ENCODE measurements at regions of chr3 and their contacts with region 1.

Region 1: GRCh38 chr3:3461317-3461716 is 281.8 kb upstream of the CRBN start:
- DNase-seq: no peak
- H3K4me3 Mint-ChIP-seq: no peak overlapping the region
- H3K27ac Mint-ChIP-seq: no peak overlapping the region
- H3K4me1 Mint-ChIP-seq: no peaks in the 10 kb centered on the region
- H3K27me3 Mint-ChIP-seq: no peaks in the 10 kb centered on the region

Region 2: GRCh38 chr3:3429841-3430240 is 31.5 kb before region 1 on chr3:
- intact Hi-C with region 1: loop called (anchors 1 kb)
- DNase-seq: no peak
- H3K4me3 Mint-ChIP-seq: no peak overlapping the region
- H3K27ac Mint-ChIP-seq: no peak overlapping the region
- H3K4me1 Mint-ChIP-seq: no peaks in the 10 kb centered on the region
- H3K27me3 Mint-ChIP-seq: no peaks in the 10 kb centered on the region

Measured in activated T-helper 2 cell treated with anti-CD3 and anti-CD28 coated beads, Interferon-gamma antibody, Interleukin-2, Interleukin-4, amounts not matched to agents 10 μg/mL and 5 μg/mL and 100 μg/mL, durations not matched to agents 14 hours and 24 hours and 36 hours (primary cell).